AG04449 (cell line): ENCODE measurements at regions of chr9 and their contacts with region 1.

Region 1: GRCh38 chr9:98998441-98999151 is 54.9 kb downstream of the COL15A1 start:
- DNase-seq: no peak
- H3K4me3 ChIP-seq: no peak overlapping the region
- CTCF ChIP-seq: peak; percentile 96

Region 2: GRCh38 chr9:98647236-98647635 is 351.4 kb before region 1 on chr9:
- CTCF ChIA-PET with region 1: no interaction called
- POLR2A ChIA-PET with region 1: no interaction called
- DNase-seq: no peak
- H3K4me3 ChIP-seq: no peak overlapping the region
- CTCF ChIP-seq: no peak

Region 3: DNA sequence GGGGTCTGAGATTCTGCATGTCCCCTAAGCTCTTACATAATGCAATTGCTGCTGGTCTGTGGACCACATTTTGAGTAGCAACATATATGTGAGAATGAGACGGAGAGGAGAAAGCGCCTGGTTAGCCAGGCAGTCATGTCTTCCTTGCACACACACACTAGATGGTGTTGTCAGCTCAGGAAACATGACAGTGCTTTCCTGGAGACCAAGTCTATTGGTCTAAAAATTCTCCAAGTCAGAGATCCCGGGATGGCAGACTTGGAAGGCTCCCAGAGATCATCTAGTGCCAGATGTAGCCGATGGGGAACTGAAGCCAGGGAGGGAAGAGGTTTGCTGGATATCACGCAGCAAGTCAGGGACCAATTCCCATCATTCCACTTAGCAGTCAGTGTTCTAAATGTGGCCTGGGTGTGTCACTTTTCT is 137.7 kb before region 1 on chr9:
- CTCF ChIA-PET with region 1: interaction called, 196 read pairs
- POLR2A ChIA-PET with region 1: no interaction called
- DNase-seq: peak; percentile 73
- H3K4me3 ChIP-seq: no peak overlapping the region
- CTCF ChIP-seq: peak; percentile 66

Region 4: GRCh38 chr9:98974994-98975712 is 23.4 kb before region 1 on chr9:
- CTCF ChIA-PET with region 1: interaction called, 192 read pairs
- POLR2A ChIA-PET with region 1: no interaction called
- DNase-seq: no peak
- H3K4me3 ChIP-seq: peak overlapping the region; percentile 38
- CTCF ChIP-seq: peak; percentile 100

Region 5: GRCh38 chr9:99019790-99020331 is 21.3 kb after region 1 on chr9:
- CTCF ChIA-PET with region 1: interaction called, 200 read pairs
- POLR2A ChIA-PET with region 1: no interaction called
- DNase-seq: peak; percentile 94
- H3K4me3 ChIP-seq: no peak overlapping the region
- CTCF ChIP-seq: no peak

Region 6: DNA sequence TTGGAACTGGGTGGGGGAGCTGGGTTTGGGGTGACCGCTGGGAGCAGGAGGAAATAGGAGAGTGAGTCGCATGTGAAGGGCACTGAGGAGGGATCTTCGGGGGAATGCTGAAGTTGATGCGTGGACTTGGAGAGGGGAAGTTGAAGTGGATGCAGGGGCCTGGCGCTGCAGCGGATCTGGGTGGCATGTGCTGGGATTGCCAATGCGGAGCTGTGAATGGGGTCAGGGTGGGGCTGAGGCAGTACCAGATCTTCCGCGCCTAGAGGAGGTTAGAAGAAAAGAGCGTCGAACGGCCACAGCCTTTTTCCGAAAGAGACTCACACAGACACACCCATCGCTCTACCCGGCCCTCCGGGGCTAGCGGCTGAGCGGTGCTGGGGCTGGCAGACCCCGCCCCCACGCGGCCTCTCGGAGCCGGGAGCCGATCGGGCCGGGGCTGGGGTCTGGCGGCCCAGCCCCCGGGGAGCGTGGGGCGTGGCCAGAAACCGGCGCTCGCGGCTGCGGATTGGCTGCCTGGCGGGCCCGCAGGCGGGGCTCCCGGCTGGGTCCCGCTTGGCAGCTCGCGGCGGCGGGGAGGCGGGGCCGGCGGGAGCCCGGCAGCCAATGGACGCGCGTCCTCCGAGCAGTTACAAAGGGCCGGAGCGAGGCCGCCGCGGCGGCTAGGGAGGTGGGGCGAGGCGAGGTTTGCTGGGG is 106.0 kb after region 1 on chr9 and contains the start of gene TGFBR1:
- CTCF ChIA-PET with region 1: interaction called, 14 read pairs
- POLR2A ChIA-PET with region 1: no interaction called
- DNase-seq: no peak
- H3K4me3 ChIP-seq: peak within 1 kb of the TSS; percentile 74
- CTCF ChIP-seq: no peak

Region 7: DNA sequence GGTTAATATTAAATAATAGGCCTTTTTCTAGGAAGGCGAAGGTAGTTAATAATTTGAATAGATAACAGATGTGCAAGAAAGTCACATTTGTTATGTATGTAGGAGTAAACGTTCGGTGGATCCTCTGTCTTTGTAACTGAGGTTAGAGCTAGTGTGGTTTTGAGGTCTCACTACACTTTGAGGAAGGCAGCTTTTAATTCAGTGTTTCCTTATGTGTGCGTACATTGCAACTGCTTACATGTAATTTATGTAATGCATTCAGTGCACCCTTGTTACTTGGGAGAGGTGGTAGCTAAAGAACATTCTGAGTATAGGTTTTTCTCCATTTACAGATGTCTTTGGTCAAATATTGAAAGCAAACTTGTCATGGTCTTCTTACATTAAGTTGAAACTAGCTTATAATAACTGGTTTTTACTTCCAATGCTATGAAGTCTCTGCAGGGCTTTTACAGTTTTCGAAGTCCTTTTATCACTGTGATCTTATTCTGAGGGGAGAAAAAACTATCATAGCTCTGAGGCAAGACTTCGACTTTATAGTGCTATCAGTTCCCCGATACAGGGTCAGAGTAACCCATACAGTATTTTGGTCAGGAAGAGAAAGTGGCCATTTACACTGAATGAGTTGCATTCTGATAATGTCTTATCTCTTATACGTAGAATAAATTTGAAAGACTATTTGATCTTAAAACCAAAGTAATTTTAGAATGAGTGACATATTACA is 152.0 kb after region 1 on chr9:
- CTCF ChIA-PET with region 1: interaction called, 342 read pairs
- POLR2A ChIA-PET with region 1: no interaction called
- DNase-seq: no peak
- H3K4me3 ChIP-seq: no peak overlapping the region
- CTCF ChIP-seq: no peak

Region 8: DNA sequence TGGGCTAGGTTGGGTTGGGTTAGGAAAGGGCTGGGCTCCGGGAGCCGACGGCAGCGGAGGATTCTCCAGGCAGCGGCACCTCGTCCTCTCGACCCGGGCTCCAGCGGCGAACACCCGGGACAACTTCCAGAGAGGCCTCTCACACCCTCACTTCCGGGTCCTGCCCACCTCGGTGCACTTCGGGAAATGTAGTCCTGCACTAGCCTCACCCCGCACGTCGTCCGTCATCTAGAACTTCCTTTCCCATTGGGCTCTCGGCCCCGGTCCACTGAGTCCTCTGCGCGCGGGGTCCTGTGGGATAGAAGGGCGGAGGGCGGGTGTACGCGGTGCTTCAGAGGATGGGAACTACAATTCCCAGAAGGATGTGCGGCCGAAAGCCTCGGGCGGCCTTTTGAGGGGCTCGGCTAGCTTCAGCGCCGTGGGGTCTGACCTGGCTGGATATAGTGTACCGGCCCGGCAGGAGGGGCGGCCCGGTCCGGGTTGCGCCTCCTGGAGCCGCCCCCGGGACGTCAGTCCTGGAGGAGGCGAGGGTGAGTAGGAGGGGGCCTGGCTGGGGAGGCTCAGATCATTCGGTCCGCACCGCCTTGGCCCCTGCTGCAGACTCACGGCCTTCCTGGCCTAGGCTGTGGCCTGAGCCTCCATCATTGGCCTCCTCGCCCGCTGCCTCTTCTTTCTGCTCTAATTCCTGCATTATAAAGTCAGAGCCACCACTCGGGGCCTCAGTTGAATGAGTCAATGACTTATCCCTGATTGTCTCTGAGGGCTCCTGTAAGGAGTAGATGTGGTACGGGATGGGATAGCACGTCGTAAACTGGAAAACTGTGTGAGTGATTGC is 1100.5 kb after region 1 on chr9 and contains the starts of genes ERP44 and INVS:
- CTCF ChIA-PET with region 1: no interaction called
- POLR2A ChIA-PET with region 1: no interaction called
- DNase-seq: peak; percentile 91
- H3K4me3 ChIP-seq: peak within 1 kb of the TSS; percentile 99
- CTCF ChIP-seq: no peak